B cell (primary cell): ENCODE measurements at regions of chr6 and their contacts with region 1.

Region 1: DNA sequence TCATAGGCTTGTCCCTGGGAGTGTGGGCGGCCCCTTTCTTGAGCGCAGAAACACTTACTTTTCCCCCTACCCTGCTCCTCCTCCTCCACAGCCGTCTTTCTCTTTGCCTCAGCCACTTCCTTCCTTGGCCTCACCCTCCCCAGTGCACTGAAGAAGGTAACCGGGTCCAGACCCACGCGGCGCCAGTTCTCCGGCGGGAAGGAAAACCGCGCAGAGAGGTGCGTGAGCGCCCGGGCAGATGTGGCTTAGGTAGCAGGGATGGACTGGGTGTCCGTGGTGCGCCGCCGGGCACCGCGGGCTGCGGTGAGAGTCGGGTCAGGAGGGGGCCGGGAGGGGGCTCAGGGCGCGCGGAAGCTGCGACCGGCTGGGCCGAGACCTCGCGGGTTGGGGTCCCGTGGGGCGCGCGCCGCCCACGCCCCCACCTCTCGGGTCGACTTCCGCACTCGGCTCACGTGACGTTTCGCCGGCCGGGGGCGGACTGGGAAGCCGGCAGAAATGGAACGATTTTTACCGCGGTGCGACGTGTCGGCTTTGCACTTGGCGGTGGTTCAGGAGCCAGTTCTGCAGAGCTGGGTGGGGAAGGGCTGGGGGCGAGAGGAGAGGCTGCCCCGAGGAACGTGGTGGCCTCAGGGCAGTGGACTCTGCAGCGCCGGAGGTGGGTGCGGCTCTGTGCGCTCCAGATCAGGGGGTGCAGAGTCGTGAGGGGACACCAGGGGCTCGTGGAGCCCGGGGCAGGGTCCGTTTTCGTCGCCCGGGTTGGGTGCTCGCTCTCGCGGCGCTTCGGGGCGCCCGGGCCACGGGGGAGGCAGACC is at the start of gene ABRACL:
- DNase-seq: peak; percentile 87
- ATAC-seq: peak; percentile 72
- H3K4me3 ChIP-seq: peak within 1 kb of the TSS; percentile 84 to 100 (median 89)
- H3K4me3 Mint-ChIP-seq: no peak within 1 kb of the TSS
- H3K27ac ChIP-seq: peak within 1 kb of the TSS; percentile 87 to 92
- H3K27ac Mint-ChIP-seq: peak within 1 kb of the TSS; percentile 94
- H3K4me1 ChIP-seq: peaks cover 27 to 28% of the 10 kb centered on the region in 2 donors
- H3K4me1 Mint-ChIP-seq: peaks cover 20% of the 10 kb centered on the region
- H3K27me3 ChIP-seq: no peaks in the 10 kb centered on the region
- H3K27me3 Mint-ChIP-seq: no peaks in the 10 kb centered on the region
- CTCF ChIP-seq: no peak
- total RNA-seq, gene ABRACL: 22.6 and 23.0 TPM in 2 replicates

Region 2: DNA sequence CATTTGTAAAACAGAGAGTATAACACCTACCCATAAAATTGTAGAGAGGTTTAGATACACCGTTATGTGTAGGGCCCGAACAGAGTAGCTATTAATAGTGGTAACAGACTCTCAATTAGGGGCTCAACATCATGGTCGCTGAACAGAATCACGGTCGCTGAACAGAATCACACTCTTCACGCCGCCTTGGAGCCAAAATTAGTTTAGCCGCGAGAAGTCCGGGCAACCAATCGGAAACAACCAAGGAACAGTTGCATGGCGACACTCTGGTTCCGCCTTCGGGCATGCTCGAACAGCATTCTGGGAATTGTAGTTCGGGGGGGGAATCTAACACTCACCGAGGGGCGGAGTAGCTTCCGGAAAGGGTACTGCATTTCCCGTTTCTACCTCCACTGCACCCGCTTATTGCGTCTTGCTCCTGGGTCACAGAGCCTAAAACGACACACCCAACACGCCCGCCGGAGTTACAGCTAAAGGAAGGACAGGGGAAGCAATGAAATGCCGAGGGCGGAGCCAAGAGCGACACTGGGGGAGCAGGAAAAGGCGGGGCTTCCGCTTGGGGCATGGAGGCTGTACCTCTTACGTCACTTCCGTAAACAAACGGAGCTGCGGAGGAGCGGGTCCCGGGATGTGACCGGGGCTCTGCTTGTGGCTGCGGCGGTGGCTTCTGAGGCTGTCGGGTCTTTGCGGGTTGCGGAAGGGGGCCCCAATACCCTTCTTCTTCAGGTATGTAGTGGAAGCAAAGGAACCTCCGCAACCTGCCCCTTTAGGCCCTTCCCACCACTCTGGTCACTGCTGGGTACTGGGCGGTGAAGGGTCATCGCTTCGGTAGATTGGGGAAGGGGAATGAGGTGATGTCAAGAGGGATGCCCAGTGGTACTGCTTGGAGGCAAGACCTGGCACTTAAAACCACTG is 255.4 kb before region 1 on chr6 and contains the start of gene CCDC28A:
- CTCF ChIA-PET with region 1: interaction called, 3 read pairs
- POLR2A ChIA-PET with region 1: interaction called, 3 read pairs
- intact Hi-C with region 1: loop called (anchors 1 kb)
- DNase-seq: peak; percentile 97
- ATAC-seq: peak; percentile 84
- H3K4me3 ChIP-seq: peak within 1 kb of the TSS; percentile 83 to 98 (median 86)
- H3K4me3 Mint-ChIP-seq: peak within 1 kb of the TSS; percentile 99
- H3K27ac ChIP-seq: peak within 1 kb of the TSS; percentile 92 to 97
- H3K27ac Mint-ChIP-seq: peak within 1 kb of the TSS; percentile 99
- H3K4me1 ChIP-seq: peaks cover 21 to 28% of the 10 kb centered on the region in 2 donors
- H3K4me1 Mint-ChIP-seq: peaks cover 32% of the 10 kb centered on the region
- H3K27me3 ChIP-seq: no peaks in the 10 kb centered on the region
- H3K27me3 Mint-ChIP-seq: no peaks in the 10 kb centered on the region
- CTCF ChIP-seq: no peak
- total RNA-seq, gene CCDC28A: 26.3 and 26.9 TPM in 2 replicates

Region 3: DNA sequence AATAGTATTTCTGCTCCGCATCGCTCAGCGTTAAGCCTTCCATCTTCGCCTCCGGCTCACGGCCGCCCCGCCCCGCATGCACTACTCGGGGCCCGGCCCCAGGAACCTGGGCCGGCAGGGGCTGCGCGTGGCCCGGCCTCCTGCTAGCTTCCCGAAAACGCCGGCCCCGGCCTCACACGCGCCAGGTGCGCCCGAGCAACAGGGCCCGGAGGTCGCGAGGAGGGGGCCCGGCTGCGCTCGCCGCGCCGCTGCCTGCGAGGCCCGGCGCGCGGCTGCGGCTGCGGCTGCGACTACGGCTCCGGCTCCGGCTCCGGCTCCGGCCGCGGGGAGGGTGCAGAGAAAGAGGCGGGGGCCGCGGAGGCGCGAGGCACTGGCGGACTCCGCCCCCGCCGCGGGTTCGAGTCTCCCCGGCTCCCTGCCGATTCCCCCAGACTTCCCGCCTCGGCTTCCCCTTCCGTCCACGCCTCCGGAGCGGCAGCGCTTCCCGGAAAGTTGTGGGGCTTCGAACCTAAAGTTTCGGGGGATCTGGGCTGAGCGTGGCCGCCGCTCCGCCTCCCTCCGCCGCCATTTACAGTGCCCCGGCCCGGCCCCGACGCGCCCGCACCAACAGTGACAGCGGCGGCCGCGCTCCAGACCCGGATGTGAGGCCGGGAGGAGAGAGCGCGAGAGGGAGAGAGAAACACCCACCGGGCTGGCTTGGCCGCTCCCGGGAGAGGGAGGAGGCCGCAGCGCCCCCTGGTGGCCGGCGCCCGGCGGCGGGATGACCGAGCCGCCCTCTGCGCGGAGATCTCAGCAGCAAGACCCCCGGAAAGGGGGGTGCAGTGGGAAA is 41.0 kb before region 1 on chr6 and contains the start of gene REPS1:
- CTCF ChIA-PET with region 1: interaction called, 15 read pairs
- POLR2A ChIA-PET with region 1: interaction called, 3 read pairs
- intact Hi-C with region 1: loop called (anchors 1 kb)
- DNase-seq: peak; percentile 91
- ATAC-seq: peak; percentile 91
- H3K4me3 ChIP-seq: peak within 1 kb of the TSS; percentile 52 to 97 (median 87)
- H3K4me3 Mint-ChIP-seq: peak within 1 kb of the TSS; percentile 87
- H3K27ac ChIP-seq: peak within 1 kb of the TSS; percentile 78 to 90
- H3K27ac Mint-ChIP-seq: peak within 1 kb of the TSS; percentile 95
- H3K4me1 ChIP-seq: peaks cover 23 to 26% of the 10 kb centered on the region in 2 donors
- H3K4me1 Mint-ChIP-seq: peaks cover 21% of the 10 kb centered on the region
- H3K27me3 ChIP-seq: no peaks in the 10 kb centered on the region
- H3K27me3 Mint-ChIP-seq: no peaks in the 10 kb centered on the region
- CTCF ChIP-seq: peak; percentile 98
- total RNA-seq, gene REPS1: 55.5 and 57.1 TPM in 2 replicates

Region 4: DNA sequence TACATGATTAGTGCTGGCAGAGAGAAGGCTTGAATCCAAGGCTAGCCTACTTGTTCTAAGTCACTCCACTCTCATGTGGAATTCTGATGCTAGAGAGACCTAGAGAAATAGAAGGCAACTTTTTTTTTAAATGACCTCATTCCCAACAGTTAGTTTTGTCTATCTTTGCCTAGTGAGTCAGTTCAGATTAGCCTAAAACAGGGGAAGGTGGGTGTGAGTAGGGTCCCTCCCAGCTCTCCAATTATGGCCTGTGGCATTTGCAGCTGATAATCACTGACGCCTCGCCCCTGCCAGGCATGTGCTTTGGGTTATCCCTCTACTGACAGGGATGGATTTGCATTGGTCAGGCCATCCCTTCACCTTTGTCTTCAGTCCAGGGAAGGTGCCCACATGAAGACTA is 249.3 kb after region 1 on chr6:
- CTCF ChIA-PET with region 1: no interaction called
- POLR2A ChIA-PET with region 1: no interaction called
- intact Hi-C with region 1: loop called (anchors 5 kb)
- DNase-seq: no peak
- ATAC-seq: no peak
- H3K4me3 ChIP-seq: no peak overlapping the region
- H3K4me3 Mint-ChIP-seq: peak overlapping the region; percentile 30
- H3K27ac ChIP-seq: peak overlapping the region; percentile 36 to 79
- H3K27ac Mint-ChIP-seq: peak overlapping the region; percentile 96
- H3K4me1 ChIP-seq: peaks cover 36 to 39% of the 10 kb centered on the region in 2 donors
- H3K4me1 Mint-ChIP-seq: peaks cover 69% of the 10 kb centered on the region
- H3K27me3 ChIP-seq: no peaks in the 10 kb centered on the region
- H3K27me3 Mint-ChIP-seq: no peaks in the 10 kb centered on the region
- CTCF ChIP-seq: no peak

Region 5: GRCh38 chr6:139369568-139370282 is 340.9 kb after region 1 on chr6:
- CTCF ChIA-PET with region 1: interaction called, 7 read pairs
- POLR2A ChIA-PET with region 1: interaction called, 11 read pairs
- intact Hi-C with region 1: loop called (anchors 1 kb)
- DNase-seq: peak; percentile 64
- ATAC-seq: no peak
- H3K4me3 ChIP-seq: no peak overlapping the region
- H3K4me3 Mint-ChIP-seq: no peak overlapping the region
- H3K27ac ChIP-seq: no peak overlapping the region
- H3K27ac Mint-ChIP-seq: no peak overlapping the region
- H3K4me1 ChIP-seq: peaks cover 13 to 20% of the 10 kb centered on the region in 2 donors
- H3K4me1 Mint-ChIP-seq: peaks cover 28% of the 10 kb centered on the region
- H3K27me3 ChIP-seq: no peaks in the 10 kb centered on the region
- H3K27me3 Mint-ChIP-seq: no peaks in the 10 kb centered on the region
- CTCF ChIP-seq: peak; percentile 78